ENCODE measurements at regions of chr5 and their contacts with region 1.

Region 1: DNA sequence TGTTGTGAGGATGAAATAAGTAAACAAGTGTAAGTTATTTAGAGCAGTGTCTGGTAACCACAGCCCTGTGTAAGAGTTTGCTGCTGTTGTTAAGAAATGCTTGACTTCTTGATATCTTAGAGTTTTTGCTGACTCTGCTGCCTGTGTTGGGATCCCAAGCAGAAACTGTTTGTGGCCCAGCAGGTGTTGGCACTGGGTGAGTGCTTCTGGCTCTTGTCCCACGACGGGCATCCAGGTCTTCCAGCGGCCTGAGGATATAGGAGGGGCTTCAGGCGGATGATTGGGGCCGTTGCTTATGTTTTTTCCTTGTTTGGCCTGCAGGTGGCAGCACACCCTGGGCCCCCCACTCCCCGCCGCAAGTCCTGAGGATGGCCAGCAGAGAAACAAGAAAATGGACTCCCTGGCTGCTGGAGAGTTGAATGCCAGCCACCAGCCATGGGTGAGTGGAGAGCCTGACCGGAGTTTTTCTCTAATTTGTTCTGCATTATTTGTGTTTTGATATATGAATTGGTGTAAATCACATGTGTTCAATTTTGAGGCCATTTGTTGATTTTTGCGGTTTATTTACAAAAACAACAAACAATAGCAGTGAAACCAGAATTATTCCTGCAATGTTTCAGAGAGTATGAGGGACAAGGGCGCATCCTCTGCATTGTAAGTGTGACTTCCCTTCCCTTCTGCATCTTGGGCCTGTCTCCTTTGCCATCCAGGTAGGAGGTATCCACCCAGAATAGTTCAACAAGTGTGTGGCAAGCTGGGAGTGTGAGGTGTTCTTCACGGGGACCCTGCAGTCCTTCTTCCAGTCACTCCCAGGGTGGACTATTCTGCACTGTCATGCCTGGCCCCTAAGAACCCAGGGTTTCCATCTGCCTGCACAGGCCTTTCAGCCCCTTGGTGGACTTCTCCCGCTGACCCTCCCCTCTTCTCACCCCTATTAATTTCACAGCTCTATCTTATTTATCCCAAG is 50.3 kb downstream of the SLC22A5 start:
- DNase-seq: peak; percentile 27 to 78 (median 60)
- ATAC-seq: peak; percentile 65 to 69
- H3K4me3 Mint-ChIP-seq: peak overlapping the region; percentile 69 to 87 (median 78)
- H3K27ac Mint-ChIP-seq: peak overlapping the region; percentile 85 to 98 (median 94)
- H3K4me1 Mint-ChIP-seq: peaks cover 46 to 100% (median 91%) of the 10 kb centered on the region in 4 donors
- H3K27me3 Mint-ChIP-seq: no peaks in the 10 kb centered on the region

Region 2: GRCh38 chr5:132473019-132473531 is 53.3 kb after region 1 on chr5:
- POLR2A ChIA-PET with region 1: interaction called, 274 read pairs
- DNase-seq: peak; percentile 58 to 95 (median 86)
- ATAC-seq: peak; percentile 68 to 92
- H3K4me3 Mint-ChIP-seq: peak overlapping the region; percentile 17 to 88 (median 46)
- H3K27ac Mint-ChIP-seq: peak overlapping the region; percentile 93 to 98 (median 94)
- H3K4me1 Mint-ChIP-seq: peaks cover 42 to 96% (median 92%) of the 10 kb centered on the region in 4 donors
- H3K27me3 Mint-ChIP-seq: no peaks in the 10 kb centered on the region